Heart right ventricle (tissue), 16 donors: ENCODE measurements at regions of chr2 and their contacts with region 1.

Region 1: DNA sequence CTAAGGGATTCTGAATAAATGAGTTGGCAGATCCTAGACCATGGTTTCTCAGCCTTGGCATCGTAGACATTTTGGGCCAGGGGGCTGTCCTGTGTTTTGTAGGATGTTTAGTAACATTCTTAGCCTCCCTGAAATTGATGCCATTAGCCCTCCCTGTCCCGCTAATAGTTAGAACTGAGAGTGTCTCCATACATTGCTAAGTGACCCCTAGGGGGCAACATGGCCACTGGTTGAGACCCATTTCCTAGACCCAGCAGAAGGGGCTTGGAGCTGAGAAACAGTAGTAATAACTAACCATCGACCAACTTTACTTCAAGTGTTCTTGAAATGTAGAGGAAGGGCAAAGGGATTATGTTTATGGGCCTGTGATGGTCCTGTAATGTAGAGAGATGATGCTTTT is 40.8 kb downstream of the KCMF1 start:
- DNase-seq: no peak
- ATAC-seq: no peak
- H3K4me3 ChIP-seq: no peak overlapping the region
- H3K27ac ChIP-seq: no peak overlapping the region
- H3K4me1 ChIP-seq: peaks cover 0 to 81% (median 65%) of the 10 kb centered on the region in 9 donors
- H3K27me3 ChIP-seq: no peaks in the 10 kb centered on the region
- CTCF ChIP-seq: peak in 1 of 9 donors; percentile 5

Region 2: GRCh38 chr2:84970868-84971509 is 40.8 kb before region 1 on chr2 and contains the start of gene KCMF1:
- intact Hi-C with region 1: loop called in 4 of 10 experiments (anchors 5 kb)
- DNase-seq: peak; percentile 85 to 86
- ATAC-seq: peak; percentile 67 to 81 (median 76)
- H3K4me3 ChIP-seq: peak within 1 kb of the TSS; percentile 57 to 99 (median 88)
- H3K27ac ChIP-seq: peak within 1 kb of the TSS; percentile 87 to 99 (median 96)
- H3K4me1 ChIP-seq: peaks cover 6 to 70% (median 56%) of the 10 kb centered on the region in 9 donors
- H3K27me3 ChIP-seq: no peaks in the 10 kb centered on the region
- CTCF ChIP-seq: no peak
- total RNA-seq, gene KCMF1: 69.0 to 89.5 (median 81.0) TPM

Region 3: DNA sequence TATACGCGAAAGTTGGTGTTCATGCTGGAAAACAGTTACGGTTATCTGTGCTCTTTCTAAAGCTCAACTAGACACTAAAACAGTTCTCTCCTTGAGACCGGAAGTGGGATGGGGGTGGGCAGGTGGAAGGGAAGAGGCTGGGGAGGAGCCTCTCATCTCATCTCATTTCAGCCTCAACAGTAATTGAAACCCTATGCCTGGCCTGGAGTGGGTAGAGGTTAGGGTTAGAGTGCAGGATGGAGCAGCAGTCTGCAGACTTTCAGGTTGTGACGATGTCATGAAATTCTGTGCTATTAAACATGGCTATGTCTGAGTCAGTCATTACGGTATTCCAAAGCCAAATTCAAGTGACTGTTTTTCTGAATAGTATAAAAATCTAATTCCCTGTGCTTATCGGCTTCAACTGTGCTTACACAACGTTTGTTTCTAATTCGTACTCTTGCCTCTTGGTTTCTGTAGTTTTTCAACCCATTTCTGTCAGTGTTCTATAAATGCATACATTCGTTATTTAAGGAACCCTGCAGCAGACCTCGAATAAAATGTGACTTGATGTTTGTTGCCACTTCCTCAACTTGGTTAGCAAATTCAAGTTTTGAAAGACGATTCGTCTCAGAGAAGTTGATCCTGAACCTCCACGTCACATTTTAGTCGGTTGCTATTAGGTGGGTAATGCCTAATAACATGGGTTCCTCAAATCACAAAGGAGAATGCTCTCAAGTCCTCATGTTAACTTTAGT is 45.6 kb after region 1 on chr2:
- intact Hi-C with region 1: no loop called
- DNase-seq: no peak
- ATAC-seq: peak in 3 of 8 donors; percentile 14 to 38 (median 35)
- H3K4me3 ChIP-seq: no peak overlapping the region
- H3K27ac ChIP-seq: no peak overlapping the region
- H3K4me1 ChIP-seq: peaks cover 0 to 37% (median 0%) of the 10 kb centered on the region in 9 donors
- H3K27me3 ChIP-seq: no peaks in the 10 kb centered on the region
- CTCF ChIP-seq: no peak